ENCODE measurements at regions of chr4 and their contacts with region 1.

Region 1: DNA sequence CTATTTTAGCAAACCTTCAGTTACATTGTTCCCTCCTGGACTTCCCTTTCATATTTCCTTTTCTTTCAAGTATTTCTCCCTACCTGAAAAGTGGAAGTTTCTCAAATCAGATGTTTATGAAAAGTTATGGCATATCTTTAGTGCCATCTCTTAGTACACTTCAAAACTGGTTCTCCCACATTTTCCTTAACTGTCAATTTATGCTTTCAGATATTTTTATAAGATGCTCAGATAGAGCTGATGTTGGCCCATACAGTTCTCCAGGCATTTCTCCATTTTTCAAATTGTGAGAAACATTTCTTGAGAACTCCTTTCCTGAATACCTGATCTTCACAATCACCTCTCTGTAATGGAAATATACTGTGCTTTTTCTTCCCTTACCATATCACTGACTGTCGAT is 32.5 kb upstream of the AP1AR start:
- DNase-seq: no peak
- H3K4me3 Mint-ChIP-seq: no peak overlapping the region
- H3K27ac Mint-ChIP-seq: peak overlapping the region; percentile 11
- H3K4me1 Mint-ChIP-seq: peaks cover 19% of the 10 kb centered on the region
- H3K27me3 Mint-ChIP-seq: peaks cover 2% of the 10 kb centered on the region

Region 2: GRCh38 chr4:110503270-110504083 is 1695.6 kb before region 1 on chr4:
- intact Hi-C with region 1: no loop called
- DNase-seq: no peak
- H3K4me3 Mint-ChIP-seq: no peak overlapping the region
- H3K27ac Mint-ChIP-seq: no peak overlapping the region
- H3K4me1 Mint-ChIP-seq: no peaks in the 10 kb centered on the region
- H3K27me3 Mint-ChIP-seq: peaks cover 11% of the 10 kb centered on the region

Region 3: DNA sequence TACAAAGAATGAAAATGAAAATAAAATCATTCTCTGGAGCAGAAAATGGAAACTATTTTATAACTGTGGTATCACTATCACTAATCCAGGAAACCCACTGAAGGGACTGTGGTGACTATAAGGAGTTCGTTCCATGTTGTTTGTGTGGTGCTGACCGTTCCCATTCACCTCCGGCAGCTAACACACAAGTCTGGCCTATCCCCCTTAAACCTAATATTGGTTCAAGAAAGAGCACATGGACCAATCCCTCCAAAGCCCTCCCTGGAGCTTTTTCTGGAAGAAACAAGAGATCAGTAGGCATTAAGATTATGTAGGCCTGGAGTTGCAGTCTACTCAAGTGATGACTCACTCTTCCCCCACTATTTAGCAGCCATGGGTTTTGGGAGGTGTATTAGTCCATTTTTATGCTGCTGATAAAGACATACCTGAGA is 79.7 kb before region 1 on chr4:
- intact Hi-C with region 1: loop called (anchors 1 kb)
- DNase-seq: peak; percentile 21
- H3K4me3 Mint-ChIP-seq: peak overlapping the region; percentile 50
- H3K27ac Mint-ChIP-seq: peak overlapping the region; percentile 94
- H3K4me1 Mint-ChIP-seq: peaks cover 24% of the 10 kb centered on the region
- H3K27me3 Mint-ChIP-seq: no peaks in the 10 kb centered on the region

Region 4: DNA sequence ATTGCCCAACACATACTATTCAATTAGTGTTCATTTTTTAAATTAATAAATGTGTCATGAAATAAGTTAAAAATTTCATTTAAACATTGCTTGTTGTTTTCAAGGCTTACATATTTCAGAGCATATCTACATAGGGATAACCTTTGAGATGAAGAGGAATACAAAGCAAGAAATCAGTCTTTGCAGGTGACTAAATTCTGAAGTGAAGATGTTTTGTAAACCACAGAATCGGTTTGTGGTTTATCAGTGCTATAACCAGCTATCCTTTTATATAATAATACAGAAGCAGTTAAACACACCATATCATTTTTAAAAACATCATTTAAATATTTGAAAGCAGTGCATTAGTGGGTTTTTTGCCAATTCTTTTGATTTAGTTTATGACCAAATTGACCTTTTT is 26.9 kb before region 1 on chr4:
- intact Hi-C with region 1: loop called (anchors 1 kb)
- DNase-seq: no peak
- H3K4me3 Mint-ChIP-seq: no peak overlapping the region
- H3K27ac Mint-ChIP-seq: no peak overlapping the region
- H3K4me1 Mint-ChIP-seq: peaks cover 33% of the 10 kb centered on the region
- H3K27me3 Mint-ChIP-seq: no peaks in the 10 kb centered on the region

Region 5: DNA sequence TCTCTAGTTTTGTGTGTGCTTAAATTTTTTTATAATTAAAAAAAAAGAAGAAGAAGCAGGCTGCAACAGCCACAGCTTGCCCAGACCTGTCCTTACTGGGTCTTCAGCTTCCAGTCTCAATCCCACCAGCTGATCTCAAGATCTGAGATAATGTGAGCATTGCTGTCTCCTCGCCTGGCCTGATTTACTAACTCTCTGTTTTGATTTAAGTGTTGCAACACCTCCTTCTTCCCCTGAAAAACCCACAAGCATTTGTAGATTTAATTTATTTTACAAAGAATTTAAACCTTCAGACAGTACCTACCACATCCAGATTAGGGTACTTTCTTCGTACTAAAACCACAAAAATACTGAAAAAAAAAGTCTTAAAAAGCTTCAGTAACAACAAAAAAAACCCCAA is 15.8 kb before region 1 on chr4:
- intact Hi-C with region 1: loop called (anchors 1 kb)
- DNase-seq: no peak
- H3K4me3 Mint-ChIP-seq: peak overlapping the region; percentile 21
- H3K27ac Mint-ChIP-seq: peak overlapping the region; percentile 53
- H3K4me1 Mint-ChIP-seq: peaks cover 42% of the 10 kb centered on the region
- H3K27me3 Mint-ChIP-seq: no peaks in the 10 kb centered on the region

Region 6: DNA sequence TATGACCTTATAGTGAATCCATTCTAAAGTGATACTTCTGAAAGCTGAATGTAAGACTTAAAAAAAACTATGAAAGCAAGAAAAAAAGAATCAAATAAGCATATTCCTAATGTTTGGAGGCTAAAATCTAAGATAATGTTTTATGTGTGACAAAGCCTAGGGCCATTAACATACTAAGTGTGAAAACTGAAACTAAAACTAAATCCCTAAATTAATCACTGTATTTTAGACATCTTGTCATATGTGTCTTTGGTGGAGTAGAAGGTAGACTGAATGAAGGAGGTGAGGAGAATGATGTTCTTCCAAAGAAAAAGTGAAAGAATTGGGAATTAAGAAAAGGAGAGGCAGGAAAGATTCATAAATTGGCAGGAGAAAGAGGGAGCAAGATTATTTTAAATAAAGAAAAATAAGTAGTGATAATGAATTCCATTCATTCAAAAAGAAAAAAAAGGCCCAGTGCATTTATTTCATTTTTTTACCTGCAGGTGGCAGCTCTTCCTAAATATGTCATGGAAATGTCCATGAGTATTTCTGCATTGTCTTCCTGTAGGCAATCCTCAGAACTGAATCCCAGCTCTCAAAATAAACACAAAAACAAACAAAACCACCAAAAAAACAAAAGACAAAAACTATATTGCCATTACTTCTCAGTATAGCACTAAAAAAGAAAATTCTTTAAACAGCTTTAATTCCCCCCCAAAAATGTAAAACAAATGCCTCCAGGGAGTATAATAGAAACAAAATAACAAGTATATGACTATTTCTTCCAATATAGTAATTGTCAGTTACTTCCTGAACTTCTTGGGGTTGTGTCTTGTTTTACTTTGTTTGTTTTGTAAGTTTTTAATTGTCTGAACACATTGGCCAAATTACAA is 15.6 kb after region 1 on chr4:
- intact Hi-C with region 1: loop called (anchors 1 kb)
- DNase-seq: no peak
- H3K4me3 Mint-ChIP-seq: no peak overlapping the region
- H3K27ac Mint-ChIP-seq: no peak overlapping the region
- H3K4me1 Mint-ChIP-seq: peaks cover 9% of the 10 kb centered on the region
- H3K27me3 Mint-ChIP-seq: no peaks in the 10 kb centered on the region

Region 7: DNA sequence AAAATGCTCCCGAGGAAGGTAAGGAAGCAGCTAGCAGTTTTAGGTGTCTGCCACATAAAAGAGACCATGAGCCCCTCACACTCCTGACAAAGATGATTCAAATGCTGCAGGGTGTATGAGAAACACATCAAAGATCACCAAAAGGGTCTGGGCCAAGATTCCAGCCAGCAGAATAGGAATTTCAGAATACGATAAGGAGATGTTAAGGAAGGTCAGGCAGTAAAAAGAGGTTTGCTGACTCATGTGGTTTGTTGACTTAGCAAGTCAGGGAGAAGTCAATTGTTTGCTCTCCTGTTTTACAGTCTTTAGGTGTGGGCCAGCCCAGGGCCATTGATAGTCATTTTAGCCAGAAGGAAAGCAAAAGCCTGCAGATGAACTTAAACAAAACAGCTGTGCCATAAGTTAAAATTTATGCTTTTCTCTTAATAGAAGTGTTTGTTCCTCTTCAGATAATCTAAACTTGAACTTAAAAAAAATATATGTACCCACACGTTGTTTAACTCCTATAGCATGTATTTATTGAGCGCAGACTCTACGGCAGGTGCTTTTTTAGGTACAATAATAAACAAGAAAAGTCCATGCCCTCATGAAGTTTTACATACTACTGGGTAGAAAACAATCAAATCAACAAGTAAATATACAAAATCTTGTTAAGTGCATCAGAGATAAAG is 1446.9 kb after region 1 on chr4:
- intact Hi-C with region 1: no loop called
- DNase-seq: no peak
- H3K4me3 Mint-ChIP-seq: no peak overlapping the region
- H3K27ac Mint-ChIP-seq: no peak overlapping the region
- H3K4me1 Mint-ChIP-seq: peaks cover 56% of the 10 kb centered on the region
- H3K27me3 Mint-ChIP-seq: no peaks in the 10 kb centered on the region

Measured in activated T-helper 1 cell treated with anti-CD3 and anti-CD28 coated beads, Interleukin-12 subunit alpha, Interleukin-12 subunit beta, Interleukin-2, Interleukin-4 antibody, amounts not matched to agents 30 ng/mL and 10 ng/mL and 1 ng/mL, durations not matched to agents 14 hours and 24 hours and 36 hours (primary cell).